AG04450 (cell line): ENCODE measurements at regions of chr11 and their contacts with region 1.

Region 1: DNA sequence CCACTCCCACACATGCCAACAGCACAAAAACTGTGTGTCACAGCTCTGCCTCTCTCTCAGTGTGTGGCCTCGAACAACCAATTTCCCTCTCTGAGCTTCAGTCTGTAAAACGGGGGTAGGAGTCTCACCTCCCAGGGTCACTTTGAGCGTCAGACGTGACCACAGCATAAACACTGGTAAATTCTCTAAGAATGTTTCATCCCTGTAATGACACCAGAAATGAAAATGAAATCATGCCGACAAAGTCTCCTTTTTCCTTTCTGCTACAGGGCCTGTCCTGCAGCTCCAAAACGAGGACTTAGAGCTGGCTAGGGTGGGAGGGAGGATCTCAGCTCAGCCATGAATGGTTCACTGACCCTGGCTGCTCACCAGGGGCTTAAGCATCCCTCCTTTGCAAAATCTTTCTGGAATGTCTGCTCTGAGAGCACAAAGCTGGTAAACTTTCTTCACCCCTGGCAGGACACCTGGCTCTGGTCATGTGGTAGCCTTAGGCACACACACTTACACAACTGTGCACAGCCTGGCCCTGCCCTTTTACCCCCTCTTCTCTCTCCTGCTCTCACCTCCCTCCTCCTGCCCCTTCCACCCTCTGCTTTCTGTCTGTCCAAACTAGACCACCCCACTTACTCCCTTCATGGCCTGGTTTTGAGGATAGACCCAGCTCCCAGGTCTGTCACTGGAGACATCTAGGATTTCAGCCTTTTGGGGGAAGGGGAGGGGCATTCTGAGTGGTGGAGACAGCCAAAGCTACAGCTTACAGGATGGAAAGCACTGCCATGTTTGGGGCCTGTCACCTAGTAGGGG is 12.3 kb upstream of the TSKU start:
- DNase-seq: peak; percentile 97
- H3K4me3 ChIP-seq: peak overlapping the region; percentile 13; the same call in 1 of the 2 replicates
- H3K27ac ChIP-seq: peak overlapping the region; percentile 98
- H3K27me3 ChIP-seq: no peaks in the 10 kb centered on the region
- CTCF ChIP-seq: no peak

Region 2: DNA sequence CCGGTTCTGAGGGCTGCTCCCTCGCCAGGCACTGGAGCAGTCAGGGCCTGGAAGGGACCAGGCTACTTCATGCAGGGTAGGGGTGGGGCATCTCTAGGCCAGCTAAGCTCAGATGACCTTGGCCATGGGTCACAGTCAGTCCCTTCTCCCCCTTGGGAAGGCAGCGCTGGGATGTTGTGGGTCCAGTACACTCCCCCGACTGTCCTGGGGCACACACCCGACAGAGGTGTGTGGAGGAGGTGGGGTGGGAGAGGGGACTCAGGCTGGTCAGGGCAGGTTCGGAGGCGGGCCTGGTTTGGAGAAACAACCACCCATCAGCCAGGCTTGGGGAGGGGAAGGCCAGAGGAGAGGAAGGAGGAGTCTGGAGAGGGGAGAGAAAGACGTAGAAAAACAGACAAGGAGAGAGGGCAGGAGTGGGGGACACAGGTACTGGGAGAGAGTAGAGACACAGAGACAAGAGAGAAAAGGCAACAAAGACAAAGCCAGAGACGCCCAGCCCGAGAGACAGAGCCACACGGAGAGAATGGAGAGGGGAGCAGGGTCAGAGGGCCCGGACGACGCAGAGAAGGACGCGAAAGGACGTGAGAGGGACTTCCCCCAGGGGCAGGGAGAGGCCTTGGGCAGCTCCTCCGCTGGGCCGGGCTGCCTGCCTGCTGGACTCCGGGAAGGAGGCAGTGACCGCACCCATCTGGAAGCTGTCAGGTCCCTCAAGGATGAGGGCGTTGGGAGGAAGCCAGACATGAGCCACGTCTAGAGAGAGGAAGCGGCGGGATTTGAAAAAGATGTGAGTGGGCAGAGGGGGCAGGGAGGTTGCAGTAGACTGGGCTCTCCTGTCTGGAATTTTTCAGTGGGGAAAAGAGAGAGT is 18.3 kb before region 1 on chr11:
- CTCF ChIA-PET with region 1: no interaction called
- POLR2A ChIA-PET with region 1: interaction called, 16 read pairs
- DNase-seq: peak; percentile 70
- H3K4me3 ChIP-seq: no peak overlapping the region
- H3K27ac ChIP-seq: peak overlapping the region; percentile 11
- H3K27me3 ChIP-seq: no peaks in the 10 kb centered on the region
- CTCF ChIP-seq: no peak

Region 3: DNA sequence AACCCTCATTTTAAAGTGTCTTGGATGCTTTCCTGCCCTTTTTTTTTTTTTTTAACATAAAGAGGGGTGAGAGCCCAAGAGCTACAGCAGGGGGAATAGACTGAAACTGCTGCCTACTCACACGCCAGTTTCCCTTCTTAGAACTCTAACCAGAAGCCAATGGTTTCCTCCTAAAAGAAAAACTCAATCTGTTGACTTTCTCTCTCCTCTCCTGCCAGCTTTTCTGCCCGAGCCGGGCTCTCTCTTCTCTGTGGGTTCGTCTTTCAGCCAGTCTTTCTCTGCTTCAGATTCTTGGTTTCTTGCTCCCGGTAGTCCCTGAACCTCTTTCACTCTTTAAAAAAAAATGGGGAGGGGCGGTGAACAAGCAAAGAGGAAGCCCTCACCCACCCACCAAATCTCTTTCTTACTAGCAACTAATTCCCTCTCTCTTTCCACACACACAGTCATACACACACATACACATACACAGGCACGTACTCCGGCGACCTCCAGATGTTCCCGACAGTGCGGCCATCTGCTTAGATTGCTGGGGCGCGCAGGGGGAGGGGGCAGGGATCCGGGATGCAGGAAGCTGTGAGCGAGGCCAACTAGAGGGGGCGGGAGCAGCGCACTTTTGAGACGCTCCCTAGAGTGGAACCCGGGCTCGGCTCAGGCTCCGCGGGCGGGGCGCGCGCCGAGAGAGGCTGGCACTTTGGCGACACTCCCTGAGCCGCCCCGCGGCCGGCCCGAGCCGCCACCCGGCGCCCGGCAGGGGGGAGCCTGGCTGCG is 11.9 kb after region 1 on chr11:
- CTCF ChIA-PET with region 1: no interaction called
- POLR2A ChIA-PET with region 1: interaction called, 42 read pairs
- DNase-seq: peak; percentile 97
- H3K4me3 ChIP-seq: peak overlapping the region; percentile 69
- H3K27ac ChIP-seq: peak overlapping the region; percentile 93
- H3K27me3 ChIP-seq: no peaks in the 10 kb centered on the region
- CTCF ChIP-seq: no peak

Region 4: DNA sequence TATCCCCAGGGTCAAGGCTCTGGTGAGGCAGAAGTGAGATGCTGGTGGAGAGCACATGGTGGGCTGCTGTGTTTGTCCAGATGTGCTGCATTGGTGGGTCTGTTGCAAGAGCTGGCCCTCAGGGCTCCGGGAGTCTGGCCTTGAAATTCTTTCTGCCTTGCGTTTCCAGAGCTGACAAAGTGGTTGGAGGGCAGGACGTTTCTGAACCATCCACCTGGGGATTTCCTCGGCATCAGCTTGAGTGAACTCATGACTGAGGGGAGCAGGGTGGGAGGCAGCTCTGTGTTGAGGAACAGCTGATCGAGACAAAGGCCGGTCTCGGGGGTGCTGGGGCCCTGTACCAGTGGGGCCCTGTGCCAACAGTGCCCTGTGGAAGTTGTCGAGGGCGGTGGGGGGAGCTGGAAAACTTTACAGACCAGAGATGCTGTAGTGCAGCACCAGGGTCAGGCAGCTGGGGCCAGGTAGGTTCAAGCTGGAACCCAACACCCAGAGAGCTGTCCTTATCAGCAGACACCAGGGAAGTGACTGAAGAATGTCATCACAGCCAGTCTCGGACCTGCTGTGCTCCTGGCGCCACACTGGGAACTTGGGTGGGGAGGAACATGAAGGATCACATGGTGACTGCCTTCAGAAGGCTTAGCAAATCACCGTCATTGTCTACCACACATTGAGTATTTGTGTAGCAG is 17.2 kb after region 1 on chr11:
- CTCF ChIA-PET with region 1: no interaction called
- POLR2A ChIA-PET with region 1: interaction called, 42 read pairs
- DNase-seq: no peak
- H3K4me3 ChIP-seq: no peak overlapping the region
- H3K27ac ChIP-seq: peak overlapping the region; percentile 41
- H3K27me3 ChIP-seq: no peaks in the 10 kb centered on the region
- CTCF ChIP-seq: no peak

Region 5: GRCh38 chr11:76807206-76807875 is 36.5 kb after region 1 on chr11:
- CTCF ChIA-PET with region 1: interaction called, 3 read pairs
- POLR2A ChIA-PET with region 1: interaction called, 17 read pairs
- DNase-seq: no peak
- H3K4me3 ChIP-seq: no peak overlapping the region
- H3K27ac ChIP-seq: no peak overlapping the region
- H3K27me3 ChIP-seq: no peaks in the 10 kb centered on the region
- CTCF ChIP-seq: peak; percentile 81

Region 6: DNA sequence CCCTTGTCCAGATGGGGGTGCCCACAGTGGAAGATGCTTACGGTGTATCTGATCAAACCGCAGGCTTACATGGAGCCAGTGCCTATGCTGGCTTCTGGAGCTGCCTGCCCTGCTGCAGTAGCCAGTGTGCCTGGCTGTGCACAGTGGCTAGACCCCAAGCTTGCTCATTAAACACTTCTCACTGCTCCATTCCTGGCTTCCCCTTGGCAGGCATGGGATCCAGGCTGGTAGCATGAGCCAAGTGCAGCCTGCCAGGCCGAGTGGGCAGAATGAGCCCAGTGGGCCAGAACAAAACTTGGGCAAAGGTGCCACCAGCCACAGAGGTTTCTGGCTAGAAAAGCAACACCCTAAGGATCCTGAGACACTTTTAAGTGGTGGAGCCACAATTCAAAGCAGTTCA is 208.0 kb after region 1 on chr11:
- CTCF ChIA-PET with region 1: no interaction called
- POLR2A ChIA-PET with region 1: no interaction called
- DNase-seq: no peak
- H3K4me3 ChIP-seq: no peak overlapping the region
- H3K27ac ChIP-seq: no peak overlapping the region
- H3K27me3 ChIP-seq: no peaks in the 10 kb centered on the region
- CTCF ChIP-seq: no peak

Region 7: GRCh38 chr11:77003954-77004353 is 233.1 kb after region 1 on chr11:
- CTCF ChIA-PET with region 1: no interaction called
- POLR2A ChIA-PET with region 1: no interaction called
- DNase-seq: no peak
- H3K4me3 ChIP-seq: no peak overlapping the region
- H3K27ac ChIP-seq: no peak overlapping the region
- H3K27me3 ChIP-seq: no peaks in the 10 kb centered on the region
- CTCF ChIP-seq: no peak